B cell (primary cell): ENCODE measurements at regions of chr3 and their contacts with region 1.

Region 1: DNA sequence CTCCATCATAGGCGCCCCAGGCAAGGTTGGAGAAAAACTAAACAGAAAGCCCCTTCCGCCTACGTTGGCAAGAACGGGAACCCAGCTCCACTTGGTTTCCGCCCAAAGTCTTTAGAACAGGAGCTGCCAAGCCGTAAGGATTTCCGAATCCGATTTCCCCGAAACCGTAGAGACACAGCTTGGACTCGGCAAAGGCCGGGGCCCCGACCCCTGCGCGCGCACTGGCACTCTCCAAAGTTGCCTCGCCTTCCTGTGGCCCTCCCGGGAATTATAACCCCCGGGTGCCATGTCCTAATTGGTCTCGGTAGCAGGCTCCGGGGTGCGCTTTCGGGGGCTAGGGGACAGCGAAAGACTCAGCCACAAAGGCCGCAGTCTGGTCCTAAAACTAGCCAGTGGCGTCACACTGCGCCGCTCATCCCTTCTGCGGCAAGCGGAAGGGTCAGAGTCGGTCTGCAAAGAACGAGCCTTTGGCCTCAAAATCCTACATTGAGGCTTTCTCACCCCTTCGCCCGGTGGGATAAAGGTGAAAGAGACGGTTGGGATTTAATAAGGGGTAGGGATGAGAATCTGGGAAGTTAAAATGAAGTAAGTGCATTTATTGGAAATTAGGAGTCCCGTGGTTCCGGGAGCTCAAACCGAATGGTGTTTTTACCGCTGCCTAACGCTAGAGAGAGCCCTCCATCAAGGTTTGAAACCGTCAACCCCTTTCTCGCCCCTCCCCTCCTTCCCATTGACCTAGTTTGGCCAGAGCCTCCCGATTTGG is 6.8 kb downstream of the BCL6 start:
- DNase-seq: peak; percentile 81
- ATAC-seq: peak; percentile 46
- H3K4me3 ChIP-seq: peak overlapping the region; percentile 66 to 93 (median 84)
- H3K4me3 Mint-ChIP-seq: peak overlapping the region; percentile 97
- H3K27ac ChIP-seq: peak overlapping the region in 1 of 2 donors; percentile 66
- H3K27ac Mint-ChIP-seq: peak overlapping the region; percentile 75
- H3K4me1 ChIP-seq: peaks cover 34 to 57% of the 10 kb centered on the region in 2 donors
- H3K4me1 Mint-ChIP-seq: peaks cover 62% of the 10 kb centered on the region
- H3K27me3 ChIP-seq: no peaks in the 10 kb centered on the region
- H3K27me3 Mint-ChIP-seq: no peaks in the 10 kb centered on the region
- CTCF ChIP-seq: peak; percentile 82

Region 2: DNA sequence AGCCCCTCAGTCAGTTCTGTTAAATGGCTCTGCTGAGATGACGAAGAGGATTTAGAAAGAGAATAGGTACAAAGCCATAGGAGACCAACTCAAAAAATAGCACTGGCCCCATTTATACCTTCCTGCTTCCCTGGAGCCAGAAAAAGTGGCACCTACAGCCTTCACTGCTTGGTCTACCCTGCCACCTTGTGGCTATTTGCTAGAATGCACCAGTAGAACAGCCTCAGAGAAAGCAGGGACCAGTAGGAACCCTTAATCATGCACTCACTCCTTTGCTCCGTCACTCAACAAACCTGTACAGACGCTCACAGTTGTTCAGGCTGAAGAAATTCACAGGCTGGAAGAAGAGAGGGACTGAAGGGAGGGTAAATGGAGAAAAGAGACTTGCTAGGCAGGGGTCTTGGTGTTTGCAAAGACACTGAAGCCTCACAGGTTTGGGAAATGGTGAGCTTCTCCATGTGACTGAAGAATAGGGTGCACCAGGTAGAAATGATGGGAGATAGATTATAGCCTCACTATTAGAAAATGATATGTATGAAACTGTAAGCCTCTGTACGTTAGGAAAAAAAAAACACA is 24.0 kb before region 1 on chr3:
- CTCF ChIA-PET with region 1: interaction called, 40 read pairs
- POLR2A ChIA-PET with region 1: no interaction called
- intact Hi-C with region 1: no loop called
- DNase-seq: peak; percentile 74
- ATAC-seq: peak; percentile 86
- H3K4me3 ChIP-seq: no peak overlapping the region
- H3K4me3 Mint-ChIP-seq: no peak overlapping the region
- H3K27ac ChIP-seq: no peak overlapping the region
- H3K27ac Mint-ChIP-seq: no peak overlapping the region
- H3K4me1 ChIP-seq: no peaks in the 10 kb centered on the region
- H3K4me1 Mint-ChIP-seq: no peaks in the 10 kb centered on the region
- H3K27me3 ChIP-seq: no peaks in the 10 kb centered on the region
- H3K27me3 Mint-ChIP-seq: no peaks in the 10 kb centered on the region
- CTCF ChIP-seq: peak; percentile 97

Region 3: DNA sequence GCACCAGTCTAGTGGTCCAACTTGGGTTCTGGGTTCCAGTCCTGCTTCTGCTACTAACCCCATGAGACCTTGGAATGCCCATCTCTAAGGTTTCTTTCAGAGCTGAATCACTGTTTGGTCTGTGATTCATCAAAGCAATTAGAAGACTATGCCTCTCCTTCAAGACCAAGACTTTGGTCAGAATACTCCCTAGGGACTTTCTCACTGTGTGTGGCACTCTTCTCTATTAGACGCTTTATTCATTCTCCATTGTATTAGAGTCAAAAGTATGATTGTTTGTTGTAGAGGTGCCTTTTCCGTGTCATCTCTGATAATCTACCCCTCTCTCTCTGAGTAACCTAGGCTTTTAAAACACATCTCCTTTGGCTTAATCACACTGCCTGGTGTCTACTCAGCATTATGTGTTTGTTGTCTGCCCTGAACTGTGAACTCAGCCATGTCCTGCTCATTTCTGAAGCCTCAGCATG is 505.9 kb after region 1 on chr3:
- CTCF ChIA-PET with region 1: interaction called, 11 read pairs
- POLR2A ChIA-PET with region 1: no interaction called
- intact Hi-C with region 1: no loop called
- DNase-seq: peak; percentile 56
- ATAC-seq: peak; percentile 64
- H3K4me3 ChIP-seq: no peak overlapping the region
- H3K4me3 Mint-ChIP-seq: peak overlapping the region; percentile 42
- H3K27ac ChIP-seq: peak overlapping the region; percentile 43 to 79
- H3K27ac Mint-ChIP-seq: peak overlapping the region; percentile 60
- H3K4me1 ChIP-seq: peaks cover 53 to 54% of the 10 kb centered on the region in 2 donors
- H3K4me1 Mint-ChIP-seq: peaks cover 70% of the 10 kb centered on the region
- H3K27me3 ChIP-seq: no peaks in the 10 kb centered on the region
- H3K27me3 Mint-ChIP-seq: no peaks in the 10 kb centered on the region
- CTCF ChIP-seq: no peak

Region 4: DNA sequence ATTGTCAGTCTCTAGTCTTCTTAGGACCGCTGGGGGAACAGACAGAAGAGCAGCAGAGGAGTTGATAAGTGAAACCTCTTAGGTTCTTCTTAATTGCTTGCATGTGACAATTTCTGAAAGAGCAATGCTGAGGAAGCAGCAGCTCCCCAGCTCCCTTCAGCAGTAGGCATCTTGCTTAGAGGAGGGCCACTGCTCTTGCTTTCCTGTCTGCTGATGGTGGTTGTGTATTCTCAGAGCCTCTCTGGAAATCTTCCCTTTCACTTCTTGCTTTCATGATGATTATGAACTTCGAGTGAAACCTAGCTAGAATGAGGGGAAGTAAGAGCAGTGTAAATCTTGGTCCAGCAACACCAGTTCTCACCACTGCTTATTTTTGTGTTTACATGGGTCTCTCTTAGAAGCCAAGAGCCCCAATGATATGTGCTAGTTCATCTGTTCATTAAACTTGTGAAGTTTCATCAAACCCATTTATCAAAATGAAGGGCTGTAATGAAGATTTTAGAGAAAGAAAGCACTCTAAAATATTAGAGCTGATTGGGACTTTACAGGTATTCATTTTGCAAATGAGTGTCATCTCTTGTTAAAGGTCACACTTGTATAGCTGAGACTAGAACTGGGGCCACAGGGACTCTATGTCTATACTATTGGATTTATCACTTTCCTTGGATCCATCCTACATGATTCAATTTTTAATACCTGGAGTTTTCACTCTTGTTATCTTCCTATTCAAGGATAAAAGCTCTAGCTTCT is 662.2 kb after region 1 on chr3:
- CTCF ChIA-PET with region 1: interaction called, 34 read pairs
- POLR2A ChIA-PET with region 1: interaction called, 4 read pairs
- intact Hi-C with region 1: no loop called
- DNase-seq: peak; percentile 82
- ATAC-seq: peak; percentile 87
- H3K4me3 ChIP-seq: no peak overlapping the region
- H3K4me3 Mint-ChIP-seq: peak overlapping the region; percentile 53
- H3K27ac ChIP-seq: peak overlapping the region; percentile 89 to 95
- H3K27ac Mint-ChIP-seq: peak overlapping the region; percentile 95
- H3K4me1 ChIP-seq: peaks cover 63 to 72% of the 10 kb centered on the region in 2 donors
- H3K4me1 Mint-ChIP-seq: peaks cover 87% of the 10 kb centered on the region
- H3K27me3 ChIP-seq: no peaks in the 10 kb centered on the region
- H3K27me3 Mint-ChIP-seq: no peaks in the 10 kb centered on the region
- CTCF ChIP-seq: no peak

Region 5: GRCh38 chr3:188584162-188584529 is 845.6 kb after region 1 on chr3:
- CTCF ChIA-PET with region 1: interaction called, 16 read pairs
- POLR2A ChIA-PET with region 1: no interaction called
- intact Hi-C with region 1: no loop called
- DNase-seq: no peak
- ATAC-seq: no peak
- H3K4me3 ChIP-seq: peak overlapping the region in 1 of 5 experiments; percentile 13
- H3K4me3 Mint-ChIP-seq: no peak overlapping the region
- H3K27ac ChIP-seq: peak overlapping the region; percentile 6 to 73
- H3K27ac Mint-ChIP-seq: no peak overlapping the region
- H3K4me1 ChIP-seq: peaks cover 49 to 53% of the 10 kb centered on the region in 2 donors
- H3K4me1 Mint-ChIP-seq: peaks cover 32% of the 10 kb centered on the region
- H3K27me3 ChIP-seq: no peaks in the 10 kb centered on the region
- H3K27me3 Mint-ChIP-seq: no peaks in the 10 kb centered on the region
- CTCF ChIP-seq: no peak

Region 6: GRCh38 chr3:188869628-188870027 is 1131.1 kb after region 1 on chr3:
- CTCF ChIA-PET with region 1: interaction called, 3 read pairs
- POLR2A ChIA-PET with region 1: no interaction called
- intact Hi-C with region 1: loop called (anchors 5 kb)
- DNase-seq: no peak
- ATAC-seq: no peak
- H3K4me3 ChIP-seq: no peak overlapping the region
- H3K4me3 Mint-ChIP-seq: no peak overlapping the region
- H3K27ac ChIP-seq: no peak overlapping the region
- H3K27ac Mint-ChIP-seq: no peak overlapping the region
- H3K4me1 ChIP-seq: no peaks in the 10 kb centered on the region
- H3K4me1 Mint-ChIP-seq: no peaks in the 10 kb centered on the region
- H3K27me3 ChIP-seq: no peaks in the 10 kb centered on the region
- H3K27me3 Mint-ChIP-seq: no peaks in the 10 kb centered on the region
- CTCF ChIP-seq: no peak

Region 7: DNA sequence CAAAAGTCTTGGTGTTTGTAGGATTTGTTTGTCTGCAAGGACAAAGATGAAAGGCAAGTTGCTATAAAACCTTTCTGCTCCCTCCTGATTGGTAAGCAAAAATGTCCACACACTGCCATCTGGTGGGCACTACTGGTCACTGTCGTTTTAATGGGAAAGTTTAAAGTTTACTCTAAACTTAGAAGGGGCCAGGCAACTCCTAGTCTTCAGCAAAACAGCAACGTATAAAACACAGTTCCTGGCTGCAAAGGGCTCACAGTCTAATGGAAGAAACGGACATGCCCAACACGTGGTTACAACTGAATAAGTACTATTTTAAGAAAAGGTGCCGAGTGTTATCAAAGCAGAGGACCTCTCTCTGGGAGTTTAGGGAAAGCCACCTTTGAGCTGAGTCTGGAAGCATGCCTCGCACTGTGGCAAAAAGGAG is 1409.6 kb after region 1 on chr3:
- CTCF ChIA-PET with region 1: interaction called, 74 read pairs
- POLR2A ChIA-PET with region 1: no interaction called
- intact Hi-C with region 1: no loop called
- DNase-seq: peak; percentile 71
- ATAC-seq: peak; percentile 58
- H3K4me3 ChIP-seq: no peak overlapping the region
- H3K4me3 Mint-ChIP-seq: no peak overlapping the region
- H3K27ac ChIP-seq: no peak overlapping the region
- H3K27ac Mint-ChIP-seq: no peak overlapping the region
- H3K4me1 ChIP-seq: no peaks in the 10 kb centered on the region
- H3K4me1 Mint-ChIP-seq: no peaks in the 10 kb centered on the region
- H3K27me3 ChIP-seq: no peaks in the 10 kb centered on the region
- H3K27me3 Mint-ChIP-seq: peaks cover 28% of the 10 kb centered on the region
- CTCF ChIP-seq: peak; percentile 84